ENCODE measurements at regions of chr18 and their contacts with region 1.

Region 1: DNA sequence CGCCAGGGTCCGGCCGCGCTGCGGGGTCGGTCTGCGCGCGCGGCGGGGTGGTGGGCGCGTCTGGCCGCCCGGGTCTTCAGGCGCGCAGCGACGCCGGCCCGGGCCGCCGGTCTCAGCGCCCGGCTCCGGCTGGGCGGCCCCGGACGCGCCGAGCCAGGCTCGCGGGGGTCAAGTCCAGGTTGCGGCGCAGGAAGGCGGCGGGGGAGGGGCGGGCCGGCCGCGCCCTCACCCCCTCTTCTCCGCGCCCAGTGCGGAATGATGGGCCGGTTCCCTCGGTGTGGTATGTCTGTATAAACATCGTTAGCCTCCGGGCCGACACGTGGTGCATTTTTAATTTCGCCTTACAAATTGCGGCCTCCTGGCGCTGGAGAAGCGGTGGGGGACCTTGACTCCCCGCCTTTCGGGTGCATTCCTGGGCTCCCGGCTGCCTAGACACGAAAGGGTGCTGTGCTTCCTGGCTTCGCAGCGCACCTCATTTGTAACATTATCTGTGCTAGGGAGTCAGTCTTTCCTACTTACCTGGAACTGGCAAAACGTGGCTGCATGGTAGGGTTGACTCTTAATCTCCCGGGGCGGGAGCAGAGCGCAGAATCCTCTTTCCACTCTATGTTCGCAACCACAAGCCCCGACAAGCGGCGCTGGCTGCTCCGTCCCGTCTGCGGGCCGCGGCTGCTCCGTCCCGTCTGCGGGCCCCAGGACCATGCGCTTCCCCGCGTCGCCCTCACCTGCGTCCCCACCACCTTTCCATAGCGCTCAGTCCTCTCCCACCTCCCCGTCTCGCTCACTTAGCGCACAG is 69.0 kb downstream of the CTAGE1 start:
- DNase-seq: no peak
- ATAC-seq: peak in 1 of 2 donors; percentile 36
- H3K4me3 ChIP-seq: peak overlapping the region; percentile 41 to 51 (median 43)
- H3K27ac ChIP-seq: peak overlapping the region in 2 of 4 donors; percentile 16 to 72
- H3K4me1 ChIP-seq: peaks cover 0 to 14% of the 10 kb centered on the region in 2 donors
- H3K27me3 ChIP-seq: peaks cover 18 to 30% (median 26%) of the 10 kb centered on the region in 3 donors
- CTCF ChIP-seq: no peak
- POLR2A ChIP-seq: no peak

Region 2: DNA sequence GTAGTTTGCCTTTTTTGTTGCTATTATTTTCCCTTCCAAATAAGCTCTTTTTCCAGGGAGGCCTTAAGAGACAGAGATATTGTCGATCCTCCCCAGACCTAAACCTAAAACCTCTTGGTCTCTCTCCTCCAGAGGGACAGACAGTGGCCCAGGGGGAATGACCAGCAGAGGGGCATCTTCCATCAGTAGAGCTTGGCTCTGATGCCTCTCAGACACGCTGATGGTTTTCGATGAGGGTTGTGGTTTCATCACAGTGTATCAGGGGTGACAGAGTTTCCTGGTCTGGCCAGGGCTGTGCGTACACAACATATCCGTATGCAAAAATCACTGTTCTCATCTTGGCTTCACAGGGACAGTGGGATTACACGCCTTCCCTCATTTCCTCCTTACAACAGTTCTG is 110.7 kb before region 1 on chr18:
- in situ Hi-C with region 1: no loop called
- intact Hi-C with region 1: no loop called
- DNase-seq: no peak
- ATAC-seq: no peak
- H3K4me3 ChIP-seq: no peak overlapping the region
- H3K27ac ChIP-seq: no peak overlapping the region
- H3K4me1 ChIP-seq: no peaks in the 10 kb centered on the region
- H3K27me3 ChIP-seq: no peaks in the 10 kb centered on the region
- CTCF ChIP-seq: no peak
- POLR2A ChIP-seq: no peak

Region 3: DNA sequence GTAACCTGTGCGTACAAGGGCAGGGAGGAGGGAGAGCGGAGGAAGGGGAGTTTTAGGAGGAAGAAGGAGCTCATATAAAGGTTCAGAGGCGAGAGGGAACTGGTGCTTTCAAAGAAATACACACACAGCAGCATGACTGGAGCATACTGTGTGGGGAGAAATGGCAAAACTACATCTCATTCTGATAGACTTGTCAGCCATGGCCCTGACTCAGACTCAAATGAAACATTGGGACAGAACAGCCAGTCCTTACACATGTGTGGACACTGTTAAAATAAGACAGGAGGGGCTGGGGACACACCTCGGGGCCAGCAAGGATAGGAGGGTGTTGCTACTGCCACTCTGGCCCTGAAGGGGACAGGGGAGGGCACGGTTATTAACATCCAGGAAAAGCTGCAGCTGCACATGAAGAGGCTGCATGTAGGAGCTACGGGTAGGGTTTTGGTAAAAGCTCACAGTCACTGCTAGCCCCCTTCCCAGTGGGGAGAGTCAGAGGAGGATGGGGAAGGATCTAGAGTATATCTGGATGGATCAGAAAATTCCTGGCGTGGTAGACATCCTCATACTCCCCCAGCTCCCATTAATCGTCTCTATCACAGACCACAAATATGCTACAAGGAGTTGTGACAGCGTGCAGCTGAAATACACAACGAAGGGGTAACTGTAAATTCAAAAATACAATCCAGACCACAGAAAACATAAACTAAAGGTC is 68.8 kb before region 1 on chr18:
- in situ Hi-C with region 1: no loop called
- intact Hi-C with region 1: loop called (anchors 10 kb)
- DNase-seq: no peak
- ATAC-seq: no peak
- H3K4me3 ChIP-seq: no peak overlapping the region
- H3K27ac ChIP-seq: no peak overlapping the region
- H3K4me1 ChIP-seq: no peaks in the 10 kb centered on the region
- H3K27me3 ChIP-seq: no peaks in the 10 kb centered on the region
- CTCF ChIP-seq: no peak
- POLR2A ChIP-seq: no peak

Region 4: DNA sequence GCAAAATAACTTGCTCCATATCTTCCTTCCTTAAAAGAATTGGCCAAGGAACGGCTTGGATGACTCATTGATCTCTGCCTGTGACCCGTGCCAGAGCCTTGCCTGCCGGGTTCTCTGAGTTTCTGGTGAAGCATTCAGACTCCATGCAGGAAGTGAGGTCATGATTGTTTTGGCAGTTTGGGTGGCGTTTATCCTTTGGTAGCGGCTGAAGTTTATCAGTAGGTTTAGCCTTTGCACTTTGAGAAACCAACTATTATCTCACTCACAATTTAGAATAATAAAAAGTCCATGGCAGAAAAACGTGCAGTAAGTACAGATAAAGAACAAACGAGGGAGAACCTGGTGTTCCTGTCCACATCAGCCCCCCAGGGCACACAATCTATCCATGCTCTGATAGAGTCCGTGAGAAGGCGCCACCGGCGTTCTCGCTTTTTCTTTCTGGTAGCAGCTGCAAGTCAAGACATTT is 84.0 kb after region 1 on chr18:
- in situ Hi-C with region 1: loop called in 1 of 4 experiments (anchors 25 kb)
- intact Hi-C with region 1: no loop called
- DNase-seq: peak; percentile 12 to 61
- ATAC-seq: peak; percentile 58 to 85
- H3K4me3 ChIP-seq: no peak overlapping the region
- H3K27ac ChIP-seq: peak overlapping the region in 2 of 4 donors; percentile 28 to 50
- H3K4me1 ChIP-seq: no peaks in the 10 kb centered on the region
- H3K27me3 ChIP-seq: no peaks in the 10 kb centered on the region
- CTCF ChIP-seq: no peak
- POLR2A ChIP-seq: no peak

Region 5: GRCh38 chr18:22765896-22766295 is 417.2 kb after region 1 on chr18:
- in situ Hi-C with region 1: no loop called
- intact Hi-C with region 1: no loop called
- DNase-seq: no peak
- ATAC-seq: no peak
- H3K4me3 ChIP-seq: no peak overlapping the region
- H3K27ac ChIP-seq: no peak overlapping the region
- H3K4me1 ChIP-seq: no peaks in the 10 kb centered on the region
- H3K27me3 ChIP-seq: no peaks in the 10 kb centered on the region
- CTCF ChIP-seq: no peak
- POLR2A ChIP-seq: no peak